Thyroid gland (tissue), 4 donors: ENCODE measurements at regions of chr14 and their contacts with region 1.

Region 1: DNA sequence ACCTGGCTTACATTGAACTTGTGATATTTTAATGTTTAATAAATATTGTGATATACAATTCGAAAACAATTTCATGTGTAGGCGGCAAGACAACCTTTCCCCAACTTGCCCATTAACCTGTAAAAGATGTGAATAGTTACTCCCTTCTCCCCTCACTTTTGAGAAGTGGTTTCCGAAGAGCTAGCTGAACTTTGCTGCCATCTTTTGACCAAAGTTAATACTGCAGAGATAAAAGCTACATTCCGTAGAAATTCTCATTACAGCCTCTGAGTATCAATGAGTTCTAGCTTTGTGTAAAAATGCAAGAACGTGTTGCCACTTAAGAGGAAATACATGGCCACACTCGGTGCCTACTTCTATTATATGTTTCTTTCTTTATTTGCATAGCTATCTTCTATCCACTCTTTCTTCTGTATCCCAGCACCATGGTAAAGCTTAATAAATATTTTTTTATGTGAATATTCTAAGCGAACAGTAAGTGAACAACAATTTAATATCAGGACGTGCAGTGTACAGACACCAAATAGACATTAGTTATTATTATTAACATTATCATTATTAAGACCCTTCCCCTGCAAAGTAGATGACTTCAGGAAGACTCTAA is 105.1 kb upstream of the TMEM260 start:
- DNase-seq: no peak
- H3K4me3 ChIP-seq: no peak overlapping the region
- H3K27ac ChIP-seq: no peak overlapping the region
- H3K4me1 ChIP-seq: no peaks in the 10 kb centered on the region
- H3K27me3 ChIP-seq: no peaks in the 10 kb centered on the region
- CTCF ChIP-seq: peak; percentile 48 to 82 (median 67)
- POLR2A ChIP-seq: no peak

Region 2: DNA sequence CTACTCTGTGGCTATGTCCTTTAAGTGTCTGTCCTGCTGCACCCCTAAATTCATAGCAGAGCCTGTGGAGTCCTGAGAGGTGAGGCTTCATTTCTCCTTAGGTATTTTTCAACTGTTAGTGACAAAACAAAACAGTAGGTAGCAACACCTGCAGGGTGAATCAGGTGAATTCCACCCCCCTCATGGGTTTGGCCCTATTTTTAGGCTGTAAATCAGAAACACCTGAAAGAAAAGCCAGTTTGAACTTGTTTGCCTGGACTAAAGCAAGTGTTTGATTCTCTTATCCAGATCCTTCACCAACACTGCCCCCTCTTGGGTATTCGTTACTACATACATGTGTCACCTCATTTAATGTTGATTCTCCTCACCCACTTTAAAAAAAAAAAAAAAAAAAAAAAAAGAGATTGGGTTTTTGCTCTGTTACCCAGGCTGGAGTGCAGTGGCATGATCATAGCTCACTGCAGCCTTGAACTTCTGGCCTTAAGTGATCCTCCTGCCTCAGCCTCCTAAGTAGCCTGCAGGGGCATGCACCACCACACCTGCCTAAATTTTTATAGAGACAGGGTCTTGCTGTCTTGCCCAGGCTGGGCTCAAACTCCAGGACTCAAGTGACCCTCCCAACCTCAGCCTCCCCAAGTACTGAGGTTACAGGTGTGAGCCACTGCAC is 1044.4 kb before region 1 on chr14:
- intact Hi-C with region 1: loop called (anchors 10 kb)
- DNase-seq: peak; percentile 64 to 70
- H3K4me3 ChIP-seq: no peak overlapping the region
- H3K27ac ChIP-seq: peak overlapping the region; percentile 27 to 76 (median 56)
- H3K4me1 ChIP-seq: peaks cover 2 to 5% of the 10 kb centered on the region in 2 donors
- H3K27me3 ChIP-seq: no peaks in the 10 kb centered on the region
- CTCF ChIP-seq: peak in 5 of 6 experiments; percentile 21 to 73 (median 45)
- POLR2A ChIP-seq: no peak

Region 3: DNA sequence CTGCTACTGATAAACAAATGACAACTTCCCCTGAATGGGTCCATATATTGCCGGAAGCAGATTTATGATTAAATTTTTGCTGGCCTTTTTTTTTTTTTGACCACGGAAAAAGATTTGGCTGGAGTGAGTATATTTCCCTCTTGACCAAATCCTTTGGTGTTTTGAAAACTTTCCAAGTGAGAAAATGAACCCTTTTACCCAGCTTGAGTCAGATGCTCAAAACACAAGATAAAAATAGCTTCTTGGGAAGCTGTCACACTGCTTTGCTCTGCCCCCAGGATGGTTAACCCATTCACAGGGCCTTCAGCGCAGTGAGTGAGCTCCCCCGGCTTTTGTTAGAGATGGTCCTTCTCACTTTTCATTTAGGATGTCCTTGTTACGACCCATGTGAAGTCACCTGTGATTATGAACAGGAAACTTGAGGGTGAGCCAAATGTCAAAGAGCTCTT is 132.0 kb before region 1 on chr14:
- intact Hi-C with region 1: no loop called
- DNase-seq: no peak
- H3K4me3 ChIP-seq: no peak overlapping the region
- H3K27ac ChIP-seq: peak overlapping the region in 2 of 3 donors; percentile 9 to 26
- H3K4me1 ChIP-seq: peaks cover 0 to 13% of the 10 kb centered on the region in 2 donors
- H3K27me3 ChIP-seq: no peaks in the 10 kb centered on the region
- CTCF ChIP-seq: no peak
- POLR2A ChIP-seq: no peak

Region 4: DNA sequence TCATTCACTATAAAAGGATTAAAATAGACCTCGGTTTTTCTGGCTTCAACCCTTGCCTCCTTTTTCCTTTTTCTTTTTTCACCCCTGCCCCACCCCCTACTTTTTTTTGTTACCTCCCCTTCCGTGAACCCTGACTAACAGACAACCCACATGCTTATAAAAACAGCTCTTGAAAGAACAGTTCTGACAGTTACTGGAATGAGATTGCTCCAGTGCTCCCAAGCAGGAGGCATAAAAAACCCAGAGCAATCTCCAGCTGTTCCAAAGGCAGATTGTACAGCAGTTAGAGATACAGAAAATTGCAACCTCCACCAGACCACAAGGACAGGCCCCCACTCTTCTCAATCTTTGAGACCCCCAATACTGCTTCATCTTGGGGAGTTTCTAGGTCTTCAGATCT is 75.2 kb after region 1 on chr14:
- intact Hi-C with region 1: no loop called
- DNase-seq: no peak
- H3K4me3 ChIP-seq: no peak overlapping the region
- H3K27ac ChIP-seq: no peak overlapping the region
- H3K4me1 ChIP-seq: peaks cover 0 to 4% of the 10 kb centered on the region in 2 donors
- H3K27me3 ChIP-seq: no peaks in the 10 kb centered on the region
- CTCF ChIP-seq: no peak
- POLR2A ChIP-seq: no peak